Activated naive CD4-positive, alpha-beta T cell treated with anti-CD3 and anti-CD28 coated beads, Interleukin-2, amount 10 ng/mL, durations not matched to agents 7 days and 5 days (primary cell): ENCODE measurements at regions of chr14 and their contacts with region 1.

Region 1: GRCh38 chr14:74905375-74906142 is 17.5 kb downstream of the RPS6KL1 start:
- DNase-seq: peak; percentile 84
- H3K4me3 Mint-ChIP-seq: no peak overlapping the region
- H3K27ac Mint-ChIP-seq: peak overlapping the region; percentile 29
- H3K4me1 Mint-ChIP-seq: peaks cover 6% of the 10 kb centered on the region
- H3K27me3 Mint-ChIP-seq: no peaks in the 10 kb centered on the region

Region 2: GRCh38 chr14:74608959-74609611 is 296.5 kb before region 1 on chr14:
- CTCF ChIA-PET with region 1: interaction called, 20 read pairs
- DNase-seq: peak; percentile 92
- H3K4me3 Mint-ChIP-seq: no peak overlapping the region
- H3K27ac Mint-ChIP-seq: no peak overlapping the region
- H3K4me1 Mint-ChIP-seq: peaks cover 13% of the 10 kb centered on the region
- H3K27me3 Mint-ChIP-seq: peaks cover 69% of the 10 kb centered on the region

Region 3: GRCh38 chr14:74875941-74876913 is 29.3 kb before region 1 on chr14 and contains the start of gene PROX2:
- CTCF ChIA-PET with region 1: interaction called, 44 read pairs
- DNase-seq: peak; percentile 39
- H3K4me3 Mint-ChIP-seq: no peak within 1 kb of the TSS
- H3K27ac Mint-ChIP-seq: peak within 1 kb of the TSS; percentile 15
- H3K4me1 Mint-ChIP-seq: peaks cover 28% of the 10 kb centered on the region
- H3K27me3 Mint-ChIP-seq: peaks cover 3% of the 10 kb centered on the region

Region 4: DNA sequence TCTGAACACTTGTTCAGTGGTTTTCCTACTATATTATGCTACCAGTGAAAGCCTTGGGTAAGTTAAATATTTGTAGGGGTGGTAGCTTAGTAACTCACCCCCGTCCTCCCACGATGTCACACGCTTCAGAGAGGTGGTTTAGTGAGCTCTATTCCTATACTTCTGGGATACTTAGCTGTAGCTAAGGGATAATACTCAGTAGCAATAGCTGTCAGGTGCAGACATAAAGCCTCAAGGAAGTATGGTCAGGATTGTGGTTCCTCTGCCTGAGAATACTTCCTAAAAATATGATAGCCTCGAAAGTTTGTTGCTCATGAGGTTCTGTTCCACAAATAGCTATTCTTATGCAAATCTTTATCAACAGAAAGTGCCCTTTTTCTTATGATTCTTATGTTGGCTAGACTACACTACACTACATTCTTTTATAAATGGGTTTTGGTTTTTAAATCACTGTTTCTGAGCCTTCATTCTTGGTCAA is 11.9 kb before region 1 on chr14:
- CTCF ChIA-PET with region 1: interaction called, 38 read pairs
- DNase-seq: no peak
- H3K4me3 Mint-ChIP-seq: no peak overlapping the region
- H3K27ac Mint-ChIP-seq: no peak overlapping the region
- H3K4me1 Mint-ChIP-seq: no peaks in the 10 kb centered on the region
- H3K27me3 Mint-ChIP-seq: no peaks in the 10 kb centered on the region

Region 5: GRCh38 chr14:75088574-75089373 is 183.2 kb after region 1 on chr14:
- CTCF ChIA-PET with region 1: interaction called, 20 read pairs
- DNase-seq: peak; percentile 67
- H3K4me3 Mint-ChIP-seq: no peak overlapping the region
- H3K27ac Mint-ChIP-seq: no peak overlapping the region
- H3K4me1 Mint-ChIP-seq: no peaks in the 10 kb centered on the region
- H3K27me3 Mint-ChIP-seq: no peaks in the 10 kb centered on the region